Testis (tissue), 5 donors: ENCODE measurements at regions of chr12 and their contacts with region 1.

Region 1: GRCh38 chr12:85866986-85867776 is 6.9 kb upstream of the NTS start:
- DNase-seq: peak; percentile 48
- H3K4me3 ChIP-seq: no peak overlapping the region
- H3K27ac ChIP-seq: no peak overlapping the region
- H3K4me1 ChIP-seq: no peaks in the 10 kb centered on the region
- H3K27me3 ChIP-seq: no peaks in the 10 kb centered on the region
- CTCF ChIP-seq: peak; percentile 46 to 80 (median 79)
- POLR2A ChIP-seq: no peak

Region 2: DNA sequence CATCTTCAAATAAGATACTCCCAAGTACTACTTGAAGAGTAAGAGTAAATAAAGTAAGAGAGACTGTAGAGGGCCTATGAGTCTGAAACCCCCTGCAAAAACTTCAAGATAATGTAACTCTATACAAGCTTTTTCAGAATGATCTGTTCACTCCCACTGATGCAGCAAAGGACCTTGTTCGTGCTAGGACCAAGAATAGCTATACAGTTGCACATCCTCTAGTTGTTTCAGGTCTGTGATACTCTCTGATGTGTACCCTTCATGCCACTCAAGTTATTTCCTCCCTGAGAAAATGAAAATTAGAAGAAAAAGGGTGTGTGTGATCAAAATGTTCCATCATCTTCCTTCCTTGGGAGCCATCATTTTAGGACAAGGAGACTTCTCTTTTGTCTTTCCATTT is 382.8 kb before region 1 on chr12:
- intact Hi-C with region 1: loop called (anchors 10 kb)
- DNase-seq: no peak
- H3K4me3 ChIP-seq: no peak overlapping the region
- H3K27ac ChIP-seq: no peak overlapping the region
- H3K4me1 ChIP-seq: no peaks in the 10 kb centered on the region
- H3K27me3 ChIP-seq: no peaks in the 10 kb centered on the region
- CTCF ChIP-seq: no peak
- POLR2A ChIP-seq: no peak

Region 3: DNA sequence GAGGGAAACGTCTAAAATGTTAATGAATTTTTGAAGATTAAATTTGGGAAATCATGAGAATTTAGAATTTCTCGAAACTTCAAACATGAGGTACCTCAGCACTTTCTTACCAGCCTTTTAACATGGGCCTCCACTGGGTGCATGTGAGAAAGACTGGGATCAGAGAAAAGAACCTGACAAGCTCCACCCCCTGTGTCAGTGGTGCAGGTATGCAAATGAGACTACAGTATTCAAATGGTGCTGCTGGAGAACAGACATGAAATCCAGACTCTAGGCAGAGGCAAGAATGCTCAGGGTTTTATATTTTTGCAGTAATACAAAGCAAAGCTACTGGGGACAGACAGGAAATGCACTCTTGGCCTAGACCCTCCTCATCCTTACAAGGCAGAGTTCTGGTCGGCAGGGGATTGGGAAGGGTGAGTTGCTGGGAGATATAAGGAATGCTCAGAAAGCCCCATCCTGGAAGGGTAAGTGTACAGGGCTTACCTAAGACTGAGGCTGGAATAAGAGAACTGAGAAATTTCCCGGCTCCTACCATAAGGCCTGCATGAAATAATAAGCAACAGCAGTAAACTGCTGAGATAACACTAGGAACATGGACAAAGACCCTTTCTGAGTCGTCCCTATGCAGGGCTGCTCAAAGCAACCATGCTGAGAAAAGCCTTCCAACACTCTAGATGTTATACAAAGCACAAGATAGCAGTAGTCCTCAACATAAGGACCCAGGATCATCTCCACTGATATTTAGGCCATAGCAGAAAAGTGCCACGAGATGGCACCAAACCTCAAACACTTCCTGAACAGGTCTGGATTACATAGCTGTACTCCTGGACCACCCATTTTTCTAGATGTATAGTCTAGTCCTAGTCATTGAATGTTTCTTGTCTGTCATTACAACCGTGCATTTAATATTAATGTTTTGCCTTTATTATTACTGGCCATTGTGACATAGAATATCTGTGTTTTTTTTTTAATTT is 291.8 kb before region 1 on chr12:
- intact Hi-C with region 1: loop called (anchors 5 kb)
- DNase-seq: peak; percentile 72
- H3K4me3 ChIP-seq: no peak overlapping the region
- H3K27ac ChIP-seq: no peak overlapping the region
- H3K4me1 ChIP-seq: no peaks in the 10 kb centered on the region
- H3K27me3 ChIP-seq: no peaks in the 10 kb centered on the region
- CTCF ChIP-seq: peak in 2 of 3 experiments; percentile 40 to 45
- POLR2A ChIP-seq: no peak

Region 4: DNA sequence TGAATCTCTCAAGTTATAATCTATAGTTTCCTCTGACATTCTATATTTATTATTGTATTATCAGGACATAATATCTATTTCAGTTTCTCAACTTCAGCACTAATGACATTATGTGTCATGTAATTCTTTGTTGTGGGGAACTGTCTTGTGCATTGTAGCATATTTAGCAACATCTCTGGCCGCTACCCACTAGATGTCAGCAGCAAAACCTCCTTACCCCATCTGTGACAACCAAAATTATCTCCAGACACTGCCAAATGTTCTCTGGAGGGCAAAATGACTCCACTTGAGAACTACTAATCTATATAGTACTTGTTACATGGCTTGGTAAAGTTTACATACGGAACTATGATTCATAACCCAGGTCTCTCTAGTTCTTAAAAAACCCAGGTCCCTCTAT is 141.2 kb before region 1 on chr12:
- intact Hi-C with region 1: no loop called
- DNase-seq: no peak
- H3K4me3 ChIP-seq: no peak overlapping the region
- H3K27ac ChIP-seq: no peak overlapping the region
- H3K4me1 ChIP-seq: no peaks in the 10 kb centered on the region
- H3K27me3 ChIP-seq: no peaks in the 10 kb centered on the region
- CTCF ChIP-seq: no peak
- POLR2A ChIP-seq: no peak

Region 5: GRCh38 chr12:86456241-86456640 is 589.1 kb after region 1 on chr12:
- intact Hi-C with region 1: no loop called
- DNase-seq: no peak
- H3K4me3 ChIP-seq: no peak overlapping the region
- H3K27ac ChIP-seq: no peak overlapping the region
- H3K4me1 ChIP-seq: no peaks in the 10 kb centered on the region
- H3K27me3 ChIP-seq: no peaks in the 10 kb centered on the region
- CTCF ChIP-seq: no peak
- POLR2A ChIP-seq: no peak